ENCODE measurements at regions of chr1 and their contacts with region 1.

Region 1: GRCh38 chr1:225977937-225978748 is 21.0 kb downstream of the SDE2 start:
- DNase-seq: peak; percentile 25 to 65
- ATAC-seq: peak; percentile 81 to 89 (median 83)
- H3K4me3 ChIP-seq: no peak overlapping the region
- H3K4me3 Mint-ChIP-seq: peak overlapping the region; percentile 56
- H3K27ac ChIP-seq: peak overlapping the region; percentile 41
- H3K27ac Mint-ChIP-seq: peak overlapping the region; percentile 47 to 66
- H3K4me1 ChIP-seq: peaks cover 22% of the 10 kb centered on the region
- H3K4me1 Mint-ChIP-seq: peaks cover 16 to 17% of the 10 kb centered on the region in 2 donors
- H3K27me3 ChIP-seq: no peaks in the 10 kb centered on the region
- H3K27me3 Mint-ChIP-seq: no peaks in the 10 kb centered on the region
- CTCF ChIP-seq: no peak

Region 2: GRCh38 chr1:225464851-225465811 is 513.0 kb before region 1 on chr1:
- intact Hi-C with region 1: no loop called
- DNase-seq: peak in 1 of 2 donors; percentile 3
- ATAC-seq: no peak
- H3K4me3 ChIP-seq: no peak overlapping the region
- H3K4me3 Mint-ChIP-seq: peak overlapping the region; percentile 78
- H3K27ac ChIP-seq: peak overlapping the region; percentile 19
- H3K27ac Mint-ChIP-seq: peak overlapping the region; percentile 96
- H3K4me1 ChIP-seq: peaks cover 81% of the 10 kb centered on the region
- H3K4me1 Mint-ChIP-seq: peaks cover 85 to 98% of the 10 kb centered on the region in 2 donors
- H3K27me3 ChIP-seq: no peaks in the 10 kb centered on the region
- H3K27me3 Mint-ChIP-seq: no peaks in the 10 kb centered on the region
- CTCF ChIP-seq: no peak

Region 3: DNA sequence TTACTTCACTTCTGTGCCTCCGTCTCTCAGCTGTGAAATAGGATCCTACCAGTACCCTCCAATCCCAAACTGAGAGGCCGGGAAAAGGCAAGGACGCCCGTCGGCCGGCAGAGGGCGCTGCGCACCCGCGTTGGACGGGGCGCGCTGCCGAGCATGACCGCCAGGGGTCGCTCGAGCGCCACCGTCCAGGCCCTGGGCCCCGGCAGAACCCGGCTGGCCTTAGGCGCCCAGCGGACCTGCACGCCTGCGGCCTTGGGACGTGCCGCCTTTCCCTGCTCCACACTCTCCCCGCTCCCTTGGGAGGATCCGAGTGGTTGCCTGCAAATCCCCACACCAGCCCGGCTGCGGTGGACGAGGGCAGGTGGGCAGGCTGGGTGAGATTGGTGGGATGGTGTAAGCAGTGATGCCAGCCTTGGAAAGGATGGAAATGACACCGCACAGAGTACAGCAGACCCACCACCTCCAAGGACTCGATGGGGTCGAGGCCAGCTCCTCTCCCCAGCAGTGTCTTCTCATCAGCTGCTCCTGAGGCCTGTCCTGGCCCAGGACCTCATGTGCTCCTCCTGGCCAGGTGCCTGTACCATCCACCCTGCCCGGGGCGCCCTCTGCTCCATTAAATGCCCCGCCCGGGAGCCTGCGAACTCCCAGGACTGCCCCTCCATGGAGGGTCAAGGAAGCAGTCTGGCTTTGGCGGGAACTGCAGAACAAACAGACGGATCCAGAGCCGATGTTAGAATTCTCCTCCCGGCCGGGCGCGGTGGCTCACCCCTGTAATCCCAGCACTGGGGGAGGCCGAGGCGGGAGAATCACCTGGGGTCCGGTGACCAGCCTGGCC is 502.9 kb before region 1 on chr1:
- intact Hi-C with region 1: loop called (anchors 1 kb)
- DNase-seq: peak; percentile 81 to 85
- ATAC-seq: peak; percentile 92 to 96 (median 93)
- H3K4me3 ChIP-seq: no peak overlapping the region
- H3K4me3 Mint-ChIP-seq: no peak overlapping the region
- H3K27ac ChIP-seq: no peak overlapping the region
- H3K27ac Mint-ChIP-seq: peak overlapping the region; percentile 62 to 77
- H3K4me1 ChIP-seq: peaks cover 56% of the 10 kb centered on the region
- H3K4me1 Mint-ChIP-seq: peaks cover 35 to 48% of the 10 kb centered on the region in 2 donors
- H3K27me3 ChIP-seq: no peaks in the 10 kb centered on the region
- H3K27me3 Mint-ChIP-seq: no peaks in the 10 kb centered on the region
- CTCF ChIP-seq: peak; percentile 100

Region 4: DNA sequence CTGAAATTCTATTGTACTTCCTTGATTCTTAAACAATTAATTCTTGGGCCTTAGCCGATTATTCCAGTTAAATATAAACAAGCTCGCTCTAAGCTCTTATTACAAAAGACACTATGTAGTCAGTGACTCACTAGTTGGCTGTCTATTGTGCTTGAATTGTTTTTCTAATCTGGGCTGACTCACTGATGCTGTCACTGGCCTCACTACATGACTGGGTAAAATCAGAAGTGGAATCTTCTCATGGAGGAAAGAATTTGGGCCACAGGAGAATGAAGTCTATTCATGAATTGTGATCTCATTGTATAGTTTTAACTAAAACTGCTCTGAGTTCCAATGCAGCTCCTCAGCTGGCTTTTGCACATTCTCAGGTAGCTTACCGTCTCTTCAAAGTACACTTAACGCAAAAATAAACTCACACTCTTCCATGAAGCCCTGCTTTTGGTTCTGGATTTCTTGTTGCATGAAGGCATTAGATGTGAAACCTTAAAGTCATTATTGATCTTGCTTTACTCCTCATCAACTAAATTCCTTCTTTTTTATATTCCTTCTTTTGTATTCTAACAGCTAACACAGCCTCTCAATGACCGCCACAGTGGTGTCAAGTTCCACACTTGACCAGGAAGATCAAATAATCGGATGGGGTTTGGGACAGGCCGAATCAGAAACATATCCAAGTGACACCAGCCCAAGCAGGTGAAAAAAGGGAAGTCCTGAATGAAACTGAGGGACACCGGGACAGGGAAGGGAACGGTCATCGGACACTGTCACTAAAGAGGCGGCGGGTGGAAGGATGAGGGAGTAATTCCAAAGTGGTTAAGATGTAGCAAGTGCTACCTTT is 469.4 kb before region 1 on chr1:
- intact Hi-C with region 1: no loop called
- DNase-seq: no peak
- ATAC-seq: no peak
- H3K4me3 ChIP-seq: no peak overlapping the region
- H3K4me3 Mint-ChIP-seq: no peak overlapping the region
- H3K27ac ChIP-seq: no peak overlapping the region
- H3K27ac Mint-ChIP-seq: no peak overlapping the region
- H3K4me1 ChIP-seq: no peaks in the 10 kb centered on the region
- H3K4me1 Mint-ChIP-seq: no peaks in the 10 kb centered on the region
- H3K27me3 ChIP-seq: no peaks in the 10 kb centered on the region
- H3K27me3 Mint-ChIP-seq: peaks cover 0 to 3% of the 10 kb centered on the region in 2 donors
- CTCF ChIP-seq: no peak

Region 5: GRCh38 chr1:225777583-225778336 is 200.4 kb before region 1 on chr1 and contains the start of gene SRP9:
- intact Hi-C with region 1: loop called (anchors 5 kb)
- DNase-seq: peak; percentile 98 to 100
- ATAC-seq: peak; percentile 95 to 100 (median 97)
- H3K4me3 ChIP-seq: peak within 1 kb of the TSS; percentile 63
- H3K4me3 Mint-ChIP-seq: no peak within 1 kb of the TSS
- H3K27ac ChIP-seq: peak within 1 kb of the TSS; percentile 90
- H3K27ac Mint-ChIP-seq: no peak within 1 kb of the TSS
- H3K4me1 ChIP-seq: peaks cover 22% of the 10 kb centered on the region
- H3K4me1 Mint-ChIP-seq: peaks cover 21 to 23% of the 10 kb centered on the region in 2 donors
- H3K27me3 ChIP-seq: no peaks in the 10 kb centered on the region
- H3K27me3 Mint-ChIP-seq: no peaks in the 10 kb centered on the region
- CTCF ChIP-seq: peak; percentile 85
- total RNA-seq, gene SRP9: 83.1 to 116 (median 93.0) TPM

Region 6: GRCh38 chr1:225962440-225962975 is 15.6 kb before region 1 on chr1:
- intact Hi-C with region 1: loop called (anchors 2 kb)
- DNase-seq: peak; percentile 67 to 70
- ATAC-seq: peak; percentile 67 to 85 (median 84)
- H3K4me3 ChIP-seq: no peak overlapping the region
- H3K4me3 Mint-ChIP-seq: no peak overlapping the region
- H3K27ac ChIP-seq: no peak overlapping the region
- H3K27ac Mint-ChIP-seq: no peak overlapping the region
- H3K4me1 ChIP-seq: peaks cover 6% of the 10 kb centered on the region
- H3K4me1 Mint-ChIP-seq: peaks cover 0 to 6% of the 10 kb centered on the region in 2 donors
- H3K27me3 ChIP-seq: no peaks in the 10 kb centered on the region
- H3K27me3 Mint-ChIP-seq: no peaks in the 10 kb centered on the region
- CTCF ChIP-seq: peak; percentile 69

Region 7: DNA sequence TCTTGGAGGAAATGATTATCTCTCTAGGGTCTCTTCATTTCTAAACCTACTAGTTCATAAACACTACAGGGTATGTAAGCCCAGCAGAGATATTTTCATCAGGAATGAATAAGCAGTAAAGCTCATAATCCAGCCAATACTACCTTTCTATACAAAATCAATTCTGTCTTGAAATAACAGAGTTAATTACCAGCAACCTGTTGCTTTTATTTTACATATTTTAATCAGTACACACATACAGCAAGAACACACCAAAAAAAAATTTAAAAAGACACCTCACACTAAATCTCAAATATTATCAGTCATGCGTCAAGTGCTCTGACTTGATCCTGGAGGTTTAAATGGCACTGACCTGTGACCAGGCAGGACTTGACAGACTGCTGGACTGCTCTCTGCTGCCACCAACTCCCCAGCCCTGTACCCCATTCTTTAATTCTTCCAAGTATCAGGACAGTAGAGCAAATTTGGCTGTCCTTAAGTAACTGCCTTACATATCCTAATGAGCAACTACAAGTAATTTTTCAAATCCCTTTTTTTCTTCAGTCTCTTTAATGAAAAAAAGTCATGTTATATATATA is 1241.7 kb after region 1 on chr1:
- intact Hi-C with region 1: no loop called
- DNase-seq: no peak
- ATAC-seq: no peak
- H3K4me3 ChIP-seq: no peak overlapping the region
- H3K4me3 Mint-ChIP-seq: no peak overlapping the region
- H3K27ac ChIP-seq: no peak overlapping the region
- H3K27ac Mint-ChIP-seq: no peak overlapping the region
- H3K4me1 ChIP-seq: no peaks in the 10 kb centered on the region
- H3K4me1 Mint-ChIP-seq: peaks cover 4 to 12% of the 10 kb centered on the region in 2 donors
- H3K27me3 ChIP-seq: no peaks in the 10 kb centered on the region
- H3K27me3 Mint-ChIP-seq: peaks cover 0 to 6% of the 10 kb centered on the region in 2 donors
- CTCF ChIP-seq: no peak